HAP-1 (cell line): ENCODE measurements at regions of chr10 and their contacts with region 1.

Region 1: GRCh38 chr10:95601116-95601719 is 40.0 kb upstream of the SORBS1 start:
- DNase-seq: peak; percentile 78 to 86
- H3K4me3 ChIP-seq: no peak overlapping the region
- H3K4me1 ChIP-seq: no peaks in the 10 kb centered on the region
- H3K27me3 ChIP-seq: no peaks in the 10 kb centered on the region

Region 2: GRCh38 chr10:94591461-94592205 is 1009.6 kb before region 1 on chr10:
- in situ Hi-C with region 1: loop called (anchors 25 kb)
- DNase-seq: no peak
- H3K4me3 ChIP-seq: no peak overlapping the region
- H3K4me1 ChIP-seq: no peaks in the 10 kb centered on the region
- H3K27me3 ChIP-seq: no peaks in the 10 kb centered on the region

Region 3: DNA sequence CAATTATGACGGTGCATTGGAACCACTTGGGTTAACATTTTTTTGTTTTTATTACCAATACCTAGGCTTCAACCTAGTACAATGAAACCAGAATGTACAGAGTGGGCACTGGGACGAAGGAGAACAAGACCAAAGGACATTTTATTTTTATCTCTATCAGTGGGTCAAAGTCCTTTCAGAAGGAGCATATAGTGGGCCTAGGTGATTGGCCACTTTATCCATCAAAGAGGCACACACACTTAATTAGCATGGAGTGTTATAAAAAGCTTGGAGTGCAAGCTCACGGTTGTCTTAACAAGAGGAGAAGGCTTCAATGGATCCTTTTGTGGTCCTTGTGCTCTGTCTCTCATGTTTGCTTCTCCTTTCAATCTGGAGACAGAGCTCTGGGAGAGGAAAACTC is 838.8 kb before region 1 on chr10 and contains the start of gene CYP2C19:
- in situ Hi-C with region 1: no loop called
- DNase-seq: no peak
- H3K4me3 ChIP-seq: no peak within 1 kb of the TSS
- H3K4me1 ChIP-seq: no peaks in the 10 kb centered on the region
- H3K27me3 ChIP-seq: no peaks in the 10 kb centered on the region

Region 4: DNA sequence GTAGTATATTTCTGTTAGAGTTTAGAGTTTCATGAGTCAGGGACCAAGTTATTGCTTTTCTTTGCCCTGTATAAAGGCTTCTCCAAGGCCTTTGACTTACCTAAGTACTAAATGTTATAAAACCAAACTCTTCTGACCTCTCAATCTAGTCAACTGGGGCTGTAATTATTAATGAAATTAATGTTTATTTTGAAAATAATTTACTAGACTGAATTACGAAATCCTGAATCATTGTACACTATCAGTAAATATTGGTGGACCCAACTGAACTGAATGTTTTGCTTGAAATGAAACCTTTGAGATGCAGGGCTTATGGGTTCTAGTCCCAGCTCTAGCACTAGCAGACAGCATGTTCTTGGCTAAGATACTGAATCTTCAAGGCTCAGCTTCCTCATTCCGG is 664.5 kb before region 1 on chr10:
- in situ Hi-C with region 1: no loop called
- DNase-seq: no peak
- H3K4me3 ChIP-seq: no peak overlapping the region
- H3K4me1 ChIP-seq: no peaks in the 10 kb centered on the region
- H3K27me3 ChIP-seq: no peaks in the 10 kb centered on the region

Region 5: DNA sequence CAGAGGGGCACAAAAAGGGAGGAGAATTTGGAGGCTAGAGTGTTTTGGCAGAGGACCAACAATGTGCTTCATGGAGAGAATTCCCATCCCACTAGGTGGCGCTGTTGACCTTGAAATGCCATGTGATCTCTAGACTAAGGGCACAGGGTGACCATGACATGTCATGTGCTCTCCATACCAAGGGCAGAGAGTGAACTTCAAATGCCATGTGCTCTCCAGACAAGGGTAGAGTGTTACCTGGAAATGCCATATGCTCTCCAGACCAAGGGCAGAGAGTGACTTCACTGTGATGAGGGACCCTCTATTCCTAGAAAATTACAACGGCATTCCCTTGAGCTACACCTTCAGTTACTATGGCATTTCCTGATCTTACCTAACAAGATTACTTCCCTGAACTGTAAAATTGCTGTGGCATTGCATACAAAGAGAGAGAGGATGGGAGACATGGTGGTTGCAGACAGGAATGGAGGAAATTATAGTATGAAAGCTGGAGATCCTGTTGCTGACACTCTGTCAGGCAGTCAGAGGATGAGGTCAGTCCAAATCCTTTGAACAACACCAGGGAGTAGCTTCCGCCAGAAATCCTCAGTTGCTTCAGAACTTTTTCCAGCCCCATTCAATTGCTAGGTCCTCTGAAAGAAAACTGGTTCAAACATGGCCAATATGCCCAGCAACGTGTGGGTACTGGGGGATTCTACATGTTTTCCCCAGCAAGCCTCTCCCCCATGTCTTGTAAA is 468.0 kb before region 1 on chr10:
- in situ Hi-C with region 1: loop called (anchors 25 kb)
- DNase-seq: peak; percentile 68 to 91
- H3K4me3 ChIP-seq: no peak overlapping the region
- H3K4me1 ChIP-seq: no peaks in the 10 kb centered on the region
- H3K27me3 ChIP-seq: no peaks in the 10 kb centered on the region

Region 6: GRCh38 chr10:95430231-95430951 is 170.8 kb before region 1 on chr10:
- in situ Hi-C with region 1: loop called (anchors 5 kb)
- DNase-seq: peak; percentile 49 to 56
- H3K4me3 ChIP-seq: no peak overlapping the region
- H3K4me1 ChIP-seq: no peaks in the 10 kb centered on the region
- H3K27me3 ChIP-seq: no peaks in the 10 kb centered on the region

Region 7: DNA sequence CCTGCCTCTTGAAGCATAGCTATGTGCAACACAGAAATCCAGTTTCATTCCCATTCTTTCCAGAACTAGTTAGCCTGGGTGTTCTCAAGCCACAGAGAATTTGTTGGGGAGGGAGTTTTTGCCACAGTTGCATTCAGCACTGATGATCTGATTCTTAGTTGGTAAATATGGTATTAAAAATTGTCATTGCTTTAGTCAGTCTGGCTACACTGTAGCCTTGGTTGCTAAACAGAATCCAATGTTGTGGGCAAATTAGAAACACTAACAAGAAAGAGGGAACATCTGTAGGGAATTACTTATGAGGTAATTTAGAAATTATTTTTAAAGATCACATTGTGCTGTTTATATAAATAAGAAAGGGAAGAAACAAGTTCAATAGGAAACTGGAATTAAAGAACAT is 249.6 kb after region 1 on chr10:
- in situ Hi-C with region 1: no loop called
- DNase-seq: no peak
- H3K4me3 ChIP-seq: no peak overlapping the region
- H3K4me1 ChIP-seq: no peaks in the 10 kb centered on the region
- H3K27me3 ChIP-seq: no peaks in the 10 kb centered on the region

Region 8: GRCh38 chr10:96271016-96271829 is 670.0 kb after region 1 on chr10 and contains the start of gene BLNK:
- in situ Hi-C with region 1: no loop called
- DNase-seq: no peak
- H3K4me3 ChIP-seq: no peak within 1 kb of the TSS
- H3K4me1 ChIP-seq: no peaks in the 10 kb centered on the region
- H3K27me3 ChIP-seq: no peaks in the 10 kb centered on the region